Breast epithelium (tissue), 4 donors: ENCODE measurements at regions of chr4 and their contacts with region 1.

Region 1: DNA sequence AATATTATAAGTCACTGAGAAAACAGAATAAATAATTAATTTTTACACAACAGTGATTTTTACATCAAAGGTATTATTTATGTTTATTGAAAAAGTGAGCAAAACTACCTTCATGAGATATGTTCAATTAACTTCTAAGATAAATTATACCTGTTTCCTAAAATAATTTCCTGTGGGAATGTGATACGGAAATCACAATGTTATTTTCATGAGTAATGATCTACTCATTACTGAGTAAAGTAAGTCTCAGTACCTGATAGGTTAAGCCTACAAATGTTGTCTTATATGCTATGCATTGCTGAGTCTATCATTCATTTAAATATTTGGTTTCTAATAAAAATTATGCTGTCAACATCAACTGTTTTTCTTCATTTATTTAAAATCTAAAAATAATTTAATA is 324.0 kb downstream of the STPG2 start:
- DNase-seq: no peak
- H3K4me3 ChIP-seq: no peak overlapping the region
- H3K27ac ChIP-seq: no peak overlapping the region
- H3K4me1 ChIP-seq: no peaks in the 10 kb centered on the region
- H3K27me3 ChIP-seq: no peaks in the 10 kb centered on the region
- CTCF ChIP-seq: no peak
- POLR2A ChIP-seq: no peak

Region 2: GRCh38 chr4:97778174-97778573 is 41.1 kb before region 1 on chr4:
- intact Hi-C with region 1: loop called (anchors 2 kb)
- DNase-seq: no peak
- H3K4me3 ChIP-seq: no peak overlapping the region
- H3K27ac ChIP-seq: no peak overlapping the region
- H3K4me1 ChIP-seq: no peaks in the 10 kb centered on the region
- H3K27me3 ChIP-seq: no peaks in the 10 kb centered on the region
- CTCF ChIP-seq: no peak
- POLR2A ChIP-seq: no peak